Esophagus muscularis mucosa (tissue), 4 donors: ENCODE measurements at regions of chrX and their contacts with region 1.

Region 1: DNA sequence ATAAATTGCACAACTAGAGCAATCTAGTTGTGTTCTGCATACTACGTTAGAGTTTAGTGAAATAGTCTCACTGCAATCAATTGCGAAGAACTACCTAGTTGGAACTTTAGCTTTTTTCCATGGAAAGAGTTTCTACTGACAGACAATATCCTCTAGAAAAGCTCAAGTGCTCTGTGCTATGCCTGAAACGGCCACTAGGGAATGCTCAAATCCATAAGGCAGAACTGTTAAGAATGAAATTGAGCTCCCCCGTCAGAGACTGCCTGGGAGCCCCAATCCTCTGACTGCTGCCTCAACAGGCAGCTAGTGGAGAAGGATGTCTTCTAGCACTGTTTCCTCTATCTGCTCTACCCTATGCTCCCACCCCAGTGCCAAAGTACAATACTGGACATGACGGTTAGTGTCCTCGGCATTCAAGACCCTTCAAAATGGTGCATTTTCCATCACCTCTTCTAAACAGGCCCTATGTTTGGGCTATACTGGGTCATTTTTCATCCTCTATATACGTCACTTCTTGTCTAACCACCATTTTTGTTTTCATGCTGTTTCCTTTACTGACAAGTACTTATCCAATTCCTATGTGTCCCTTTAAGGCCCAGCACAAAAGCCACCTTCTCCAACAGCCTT is 35.3 kb downstream of the FRMD7 start:
- DNase-seq: no peak
- H3K4me3 ChIP-seq: no peak overlapping the region
- H3K27ac ChIP-seq: no peak overlapping the region
- H3K4me1 ChIP-seq: no peaks in the 10 kb centered on the region
- H3K27me3 ChIP-seq: peaks cover 0 to 6% (median 0%) of the 10 kb centered on the region in 4 donors
- CTCF ChIP-seq: peak; percentile 58 to 80 (median 58)
- EP300 ChIP-seq: no peak
- POLR2A ChIP-seq: no peak

Region 2: DNA sequence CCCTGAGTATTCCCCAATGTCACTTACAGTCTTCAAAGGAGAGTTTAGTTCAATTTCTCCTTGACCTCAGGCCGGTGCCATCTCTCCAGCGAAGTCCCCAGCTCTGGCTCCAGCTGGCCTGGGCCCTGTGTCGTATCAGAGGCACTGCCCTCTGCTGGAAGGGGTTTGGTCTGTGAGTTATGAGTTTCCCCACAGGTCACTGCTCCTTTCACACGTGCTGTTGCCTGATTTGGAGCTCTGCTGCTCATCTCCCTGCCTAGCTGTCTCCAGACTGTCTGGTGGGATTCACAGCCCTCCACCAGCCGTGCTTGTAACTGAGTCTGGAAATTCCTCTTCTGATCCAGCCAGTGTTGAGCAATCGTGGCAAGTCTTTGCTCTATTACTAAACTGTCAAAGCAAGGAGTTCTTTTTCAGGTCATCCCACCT is 126.8 kb after region 1 on chrX and contains the start of gene RAP2C:
- intact Hi-C with region 1: loop called (anchors 5 kb)
- DNase-seq: peak; percentile 91
- H3K4me3 ChIP-seq: peak within 1 kb of the TSS; percentile 71 to 78 (median 76)
- H3K27ac ChIP-seq: peak within 1 kb of the TSS; percentile 93 to 97 (median 96)
- H3K4me1 ChIP-seq: peaks cover 2 to 33% (median 24%) of the 10 kb centered on the region in 4 donors
- H3K27me3 ChIP-seq: no peaks in the 10 kb centered on the region
- CTCF ChIP-seq: peak; percentile 44 to 53 (median 46)
- EP300 ChIP-seq: no peak
- POLR2A ChIP-seq: no peak
- total RNA-seq, gene RAP2C: 12.0 to 13.9 (median 13.3) TPM

Region 3: DNA sequence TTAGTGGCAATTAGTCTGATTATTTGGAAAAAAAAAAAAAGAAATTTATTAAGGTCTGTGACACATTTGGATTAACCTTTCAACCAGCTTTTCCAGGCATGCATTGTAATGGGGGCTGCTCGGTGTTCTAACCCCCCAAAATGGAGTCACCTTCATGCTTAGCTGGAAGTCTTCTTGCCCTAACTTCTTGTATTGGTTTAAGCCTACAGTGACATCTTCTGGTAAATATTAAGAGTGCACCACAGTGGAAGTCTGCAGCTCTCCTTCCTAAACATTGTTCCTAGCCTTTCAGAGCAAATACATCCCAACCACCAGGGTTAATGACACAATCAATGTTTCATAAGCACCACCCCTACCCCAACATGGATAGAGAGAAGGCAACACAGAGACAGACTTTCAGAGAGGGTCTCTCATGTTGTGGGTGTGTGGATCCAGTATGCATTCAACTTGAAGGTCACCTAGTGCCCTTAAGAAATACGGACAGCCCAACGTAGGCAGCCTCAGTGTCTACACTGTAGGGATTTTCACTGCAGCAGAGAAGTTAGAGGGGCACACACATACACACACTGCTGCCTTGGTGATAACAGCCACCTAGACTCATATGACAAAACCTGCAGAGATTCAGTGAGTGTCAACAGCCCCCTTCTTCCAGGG is 539.2 kb after region 1 on chrX:
- intact Hi-C with region 1: loop called (anchors 5 kb)
- DNase-seq: no peak
- H3K4me3 ChIP-seq: no peak overlapping the region
- H3K27ac ChIP-seq: no peak overlapping the region
- H3K4me1 ChIP-seq: no peaks in the 10 kb centered on the region
- H3K27me3 ChIP-seq: peaks cover 0 to 4% (median 0%) of the 10 kb centered on the region in 4 donors
- CTCF ChIP-seq: peak; percentile 41 to 52 (median 50)
- EP300 ChIP-seq: no peak
- POLR2A ChIP-seq: no peak